Common myeloid progenitor, CD34-positive (primary cell): ENCODE measurements at regions of chr21 and their contacts with region 1.

Region 1: GRCh38 chr21:28745131-28746016 is 247.3 kb downstream of the LTN1 start:
- DNase-seq: peak; percentile 86 to 93 (median 91)
- H3K4me3 ChIP-seq: peak overlapping the region; percentile 1 to 85 (median 71)
- H3K27ac ChIP-seq: peak overlapping the region in 1 of 2 experiments; percentile 44
- H3K4me1 ChIP-seq: peaks cover 0 to 6% (median 5%) of the 10 kb centered on the region in 4 experiments
- H3K27me3 ChIP-seq: no peaks in the 10 kb centered on the region

Region 2: GRCh38 chr21:26845066-26845758 is 1900.2 kb before region 1 on chr21 and contains the start of gene ADAMTS1:
- CTCF ChIA-PET with region 1: interaction called, 39 read pairs
- POLR2A ChIA-PET with region 1: no interaction called
- DNase-seq: peak; percentile 64 to 73 (median 69)
- H3K4me3 ChIP-seq: peak within 1 kb of the TSS; percentile 64 to 92 (median 82)
- H3K27ac ChIP-seq: no peak within 1 kb of the TSS
- H3K4me1 ChIP-seq: peaks cover 0 to 51% (median 40%) of the 10 kb centered on the region in 4 experiments
- H3K27me3 ChIP-seq: peaks cover 3 to 31% (median 6%) of the 10 kb centered on the region in 5 experiments

Region 3: GRCh38 chr21:26852423-26852822 is 1893.0 kb before region 1 on chr21:
- CTCF ChIA-PET with region 1: interaction called, 39 read pairs
- POLR2A ChIA-PET with region 1: no interaction called
- DNase-seq: no peak
- H3K4me3 ChIP-seq: no peak overlapping the region
- H3K27ac ChIP-seq: no peak overlapping the region
- H3K4me1 ChIP-seq: peaks cover 0 to 4% (median 0%) of the 10 kb centered on the region in 4 experiments
- H3K27me3 ChIP-seq: peaks cover 0 to 6% (median 2%) of the 10 kb centered on the region in 5 experiments

Region 4: DNA sequence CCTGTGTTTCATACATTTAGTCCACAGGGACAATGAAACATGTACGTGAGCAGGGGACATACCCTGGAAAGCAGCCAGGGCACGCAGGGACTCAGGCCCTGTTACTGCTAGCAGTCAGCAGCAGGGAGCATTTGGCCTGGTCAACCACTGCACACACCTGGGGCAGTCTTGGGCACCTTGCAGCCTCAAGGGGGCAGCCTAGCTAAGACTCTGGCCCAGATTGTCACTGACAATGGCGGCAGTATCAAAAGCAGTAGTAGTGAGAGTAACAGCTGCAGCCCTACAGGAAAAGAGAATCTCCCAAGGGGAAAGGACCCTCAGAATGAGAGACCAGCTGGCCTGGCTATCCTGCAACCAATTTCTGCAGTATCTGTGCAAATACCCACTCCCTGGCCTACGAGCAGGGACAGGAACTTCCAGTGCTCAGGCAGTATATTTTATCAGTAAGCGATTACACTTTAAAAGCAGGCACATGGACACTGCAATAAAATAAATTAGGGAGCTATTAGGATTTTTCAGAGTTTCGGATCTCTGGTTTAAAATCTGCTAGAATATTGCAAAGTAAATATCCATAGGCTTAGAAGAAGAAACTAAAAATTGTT is 228.3 kb before region 1 on chr21:
- CTCF ChIA-PET with region 1: interaction called, 75 read pairs
- POLR2A ChIA-PET with region 1: no interaction called
- DNase-seq: peak; percentile 70 to 75 (median 72)
- H3K4me3 ChIP-seq: peak overlapping the region in 1 of 7 experiments; percentile 6
- H3K27ac ChIP-seq: no peak overlapping the region
- H3K4me1 ChIP-seq: peaks cover 4 to 12% (median 6%) of the 10 kb centered on the region in 4 experiments
- H3K27me3 ChIP-seq: no peaks in the 10 kb centered on the region

Region 5: GRCh38 chr21:28627691-28628090 is 117.7 kb before region 1 on chr21:
- CTCF ChIA-PET with region 1: no interaction called
- POLR2A ChIA-PET with region 1: no interaction called
- DNase-seq: no peak
- H3K4me3 ChIP-seq: no peak overlapping the region
- H3K27ac ChIP-seq: no peak overlapping the region
- H3K4me1 ChIP-seq: peaks cover 0 to 11% (median 2%) of the 10 kb centered on the region in 4 experiments
- H3K27me3 ChIP-seq: no peaks in the 10 kb centered on the region

Region 6: GRCh38 chr21:28822486-28823335 is 77.3 kb after region 1 on chr21:
- CTCF ChIA-PET with region 1: no interaction called
- POLR2A ChIA-PET with region 1: no interaction called
- DNase-seq: no peak
- H3K4me3 ChIP-seq: no peak overlapping the region
- H3K27ac ChIP-seq: no peak overlapping the region
- H3K4me1 ChIP-seq: no peaks in the 10 kb centered on the region
- H3K27me3 ChIP-seq: no peaks in the 10 kb centered on the region

Region 7: DNA sequence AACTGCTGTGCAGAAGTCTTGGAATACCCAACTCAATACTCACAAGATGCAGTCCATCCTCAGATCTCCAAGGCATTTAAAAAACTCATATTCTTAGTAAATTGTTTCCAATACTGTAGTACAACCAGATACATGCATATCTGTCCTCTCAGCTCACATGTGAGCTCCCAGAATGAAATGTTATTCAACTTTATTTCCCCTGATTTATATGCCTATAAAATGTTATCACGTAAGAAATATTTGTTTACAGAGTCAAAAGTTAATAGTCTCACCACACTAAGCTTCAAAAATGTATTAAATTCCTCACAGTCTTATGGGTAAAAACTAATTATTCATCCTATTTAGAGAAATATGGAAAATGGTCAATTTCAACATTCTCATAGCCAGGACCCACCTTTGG is 190.7 kb after region 1 on chr21:
- CTCF ChIA-PET with region 1: interaction called, 10 read pairs
- POLR2A ChIA-PET with region 1: no interaction called
- DNase-seq: no peak
- H3K4me3 ChIP-seq: no peak overlapping the region
- H3K27ac ChIP-seq: no peak overlapping the region
- H3K4me1 ChIP-seq: peaks cover 0 to 7% (median 2%) of the 10 kb centered on the region in 4 experiments
- H3K27me3 ChIP-seq: no peaks in the 10 kb centered on the region